ENCODE measurements at regions of chr10 and their contacts with region 1.

Region 1: GRCh38 chr10:92592761-92593618 is at the start of gene KIF11:
- DNase-seq: peak; percentile 89 to 95 (median 94)
- ATAC-seq: peak; percentile 89
- H3K4me3 ChIP-seq: peak within 1 kb of the TSS; percentile 83
- H3K4me3 Mint-ChIP-seq: peak within 1 kb of the TSS; percentile 95 to 100 (median 99)
- H3K27ac ChIP-seq: peak within 1 kb of the TSS; percentile 96
- H3K27ac Mint-ChIP-seq: peak within 1 kb of the TSS; percentile 96 to 100 (median 100)
- H3K4me1 ChIP-seq: peaks cover 12 to 28% of the 10 kb centered on the region in 2 donors
- H3K4me1 Mint-ChIP-seq: peaks cover 9 to 54% (median 28%) of the 10 kb centered on the region in 7 donors
- H3K27me3 ChIP-seq: no peaks in the 10 kb centered on the region
- H3K27me3 Mint-ChIP-seq: peaks cover 0 to 5% (median 0%) of the 10 kb centered on the region in 5 donors
- total RNA-seq, gene KIF11: 0.32 to 52.6 (median 0.75) TPM

Region 2: DNA sequence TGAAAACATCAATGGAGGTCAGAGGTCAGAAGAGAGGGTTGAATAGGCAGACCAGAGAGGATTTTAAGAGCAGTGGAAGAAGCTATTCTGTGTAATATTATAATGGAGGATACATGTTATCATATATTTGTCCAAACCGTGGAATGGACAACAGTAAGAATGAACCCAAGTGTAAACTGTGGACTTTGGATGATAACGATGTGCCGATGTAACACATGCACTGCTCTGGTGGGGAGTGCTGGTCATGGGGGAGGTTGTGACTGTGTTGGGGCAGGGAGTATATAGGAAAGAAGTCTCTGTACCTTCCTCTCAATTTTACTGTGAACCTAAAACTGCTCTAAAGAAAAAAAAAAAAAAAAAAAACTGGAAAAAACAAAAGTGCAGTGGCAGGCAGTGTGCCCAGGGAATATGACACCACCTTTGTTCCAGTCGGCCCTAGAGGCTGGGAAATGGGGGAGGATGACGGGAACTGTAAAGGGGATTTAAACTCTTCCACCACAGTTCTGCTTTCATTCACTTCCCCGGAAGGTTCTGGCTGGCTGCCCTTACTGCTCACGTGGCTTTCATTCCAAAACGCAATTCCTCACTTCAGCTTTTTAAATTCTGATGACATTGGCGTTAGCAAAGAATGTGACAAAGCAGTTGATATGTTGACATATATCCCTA is 1558.4 kb before region 1 on chr10:
- CTCF ChIA-PET with region 1: no interaction called
- POLR2A ChIA-PET with region 1: no interaction called
- intact Hi-C with region 1: loop called in 1 of 2 experiments (anchors 10 kb)
- DNase-seq: no peak
- ATAC-seq: no peak
- H3K4me3 ChIP-seq: no peak overlapping the region
- H3K4me3 Mint-ChIP-seq: peak overlapping the region in 9 of 10 donors; percentile 43 to 88 (median 64)
- H3K27ac ChIP-seq: peak overlapping the region; percentile 57
- H3K27ac Mint-ChIP-seq: peak overlapping the region; percentile 86 to 97 (median 89)
- H3K4me1 ChIP-seq: peaks cover 14 to 17% of the 10 kb centered on the region in 2 donors
- H3K4me1 Mint-ChIP-seq: peaks cover 14 to 33% (median 30%) of the 10 kb centered on the region in 7 donors
- H3K27me3 ChIP-seq: no peaks in the 10 kb centered on the region
- H3K27me3 Mint-ChIP-seq: peaks cover 0 to 19% (median 0%) of the 10 kb centered on the region in 5 donors

Region 3: DNA sequence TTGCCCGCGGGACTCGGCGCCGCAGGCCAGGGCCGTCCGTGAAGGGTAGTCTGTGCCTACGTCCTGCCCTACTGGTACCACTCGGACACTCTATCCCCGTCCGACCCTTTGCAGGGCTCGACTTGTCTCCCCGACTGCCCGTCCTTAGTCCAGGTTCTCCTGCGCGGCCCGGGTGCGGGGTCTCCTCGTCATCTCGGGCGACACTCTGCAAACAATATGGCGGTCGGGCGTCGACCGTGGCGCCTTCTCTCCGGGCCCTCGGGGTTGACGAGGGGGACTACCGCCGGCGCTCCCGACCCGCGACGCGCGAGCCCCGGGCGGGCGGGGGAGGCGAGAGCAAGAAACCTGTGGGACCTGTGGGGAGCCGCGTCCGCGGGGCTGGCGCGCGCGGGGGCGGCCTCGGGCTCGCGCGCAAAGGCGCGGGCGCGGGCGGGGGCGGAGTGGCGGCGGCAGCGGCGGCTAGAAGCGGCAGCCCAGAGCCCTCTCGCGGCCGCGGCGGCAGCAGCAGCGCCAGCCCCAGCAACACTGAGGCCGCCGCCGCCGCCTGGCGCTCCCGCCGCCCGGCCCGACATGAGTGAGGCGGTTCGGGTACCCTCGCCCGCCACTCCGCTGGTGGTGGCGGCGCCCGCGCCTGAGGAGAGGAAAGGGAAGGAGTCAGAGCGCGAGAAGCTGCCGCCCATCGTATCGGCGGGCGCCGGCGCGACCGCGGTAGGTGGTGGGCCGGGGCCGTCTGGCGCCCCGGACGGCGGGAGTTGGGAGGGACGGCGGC is 1182.9 kb before region 1 on chr10 and contains the start of gene HECTD2:
- CTCF ChIA-PET with region 1: no interaction called
- POLR2A ChIA-PET with region 1: no interaction called
- intact Hi-C with region 1: loop called in 1 of 2 experiments (anchors 2 kb)
- DNase-seq: peak; percentile 76 to 89 (median 86)
- ATAC-seq: peak; percentile 93
- H3K4me3 ChIP-seq: peak within 1 kb of the TSS; percentile 83
- H3K4me3 Mint-ChIP-seq: peak within 1 kb of the TSS; percentile 75 to 93 (median 90)
- H3K27ac ChIP-seq: peak within 1 kb of the TSS; percentile 88
- H3K27ac Mint-ChIP-seq: peak within 1 kb of the TSS; percentile 81 to 96 (median 91)
- H3K4me1 ChIP-seq: peaks cover 8 to 17% of the 10 kb centered on the region in 2 donors
- H3K4me1 Mint-ChIP-seq: peaks cover 8 to 18% (median 13%) of the 10 kb centered on the region in 7 donors
- H3K27me3 ChIP-seq: no peaks in the 10 kb centered on the region
- H3K27me3 Mint-ChIP-seq: peaks cover 0 to 27% (median 0%) of the 10 kb centered on the region in 5 donors
- total RNA-seq, gene HECTD2: 1.1 to 4.6 (median 2.0) TPM

Region 4: GRCh38 chr10:92290837-92291615 is 302.0 kb before region 1 on chr10 and contains the starts of genes CPEB3 and MARCHF5:
- CTCF ChIA-PET with region 1: no interaction called
- POLR2A ChIA-PET with region 1: interaction called, 6 read pairs
- intact Hi-C with region 1: loop called (anchors 1 kb)
- DNase-seq: peak; percentile 77 to 92 (median 85)
- ATAC-seq: peak; percentile 99
- H3K4me3 ChIP-seq: peak within 1 kb of the TSS; percentile 90
- H3K4me3 Mint-ChIP-seq: peak within 1 kb of the TSS; percentile 85 to 97 (median 95)
- H3K27ac ChIP-seq: peak within 1 kb of the TSS; percentile 90
- H3K27ac Mint-ChIP-seq: peak within 1 kb of the TSS; percentile 75 to 96 (median 88)
- H3K4me1 ChIP-seq: peaks cover 0 to 6% of the 10 kb centered on the region in 2 donors
- H3K4me1 Mint-ChIP-seq: peaks cover 21 to 41% (median 31%) of the 10 kb centered on the region in 7 donors
- H3K27me3 ChIP-seq: no peaks in the 10 kb centered on the region
- H3K27me3 Mint-ChIP-seq: no peaks in the 10 kb centered on the region
- total RNA-seq, gene CPEB3: 2.0 to 3.3 (median 2.2) TPM
- total RNA-seq, gene MARCHF5: 22.0 to 37.1 (median 33.8) TPM

Region 5: DNA sequence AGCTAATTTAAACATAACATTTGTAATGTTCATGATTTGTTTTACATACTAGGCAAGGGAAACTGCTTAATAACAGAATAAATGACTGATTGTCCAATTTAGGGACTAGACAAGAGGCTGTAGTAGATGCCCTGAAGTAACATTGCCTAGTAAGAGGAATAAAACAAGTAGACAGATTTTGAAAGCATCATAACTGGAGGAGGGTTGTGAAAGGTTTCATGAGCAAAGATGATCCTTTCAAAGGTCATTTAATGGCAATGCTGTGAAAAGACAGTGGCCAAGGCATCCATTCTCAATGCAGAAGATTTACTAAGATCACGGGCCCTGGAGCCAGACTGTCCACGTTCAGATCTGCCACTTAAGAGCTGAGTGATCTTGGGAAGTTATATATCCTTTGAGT is 51.9 kb after region 1 on chr10:
- CTCF ChIA-PET with region 1: no interaction called
- POLR2A ChIA-PET with region 1: no interaction called
- intact Hi-C with region 1: loop called in 1 of 2 experiments (anchors 1 kb)
- DNase-seq: no peak
- ATAC-seq: no peak
- H3K4me3 ChIP-seq: no peak overlapping the region
- H3K4me3 Mint-ChIP-seq: no peak overlapping the region
- H3K27ac ChIP-seq: no peak overlapping the region
- H3K27ac Mint-ChIP-seq: no peak overlapping the region
- H3K4me1 ChIP-seq: no peaks in the 10 kb centered on the region
- H3K4me1 Mint-ChIP-seq: peaks cover 0 to 13% (median 0%) of the 10 kb centered on the region in 7 donors
- H3K27me3 ChIP-seq: no peaks in the 10 kb centered on the region
- H3K27me3 Mint-ChIP-seq: no peaks in the 10 kb centered on the region

Region 6: DNA sequence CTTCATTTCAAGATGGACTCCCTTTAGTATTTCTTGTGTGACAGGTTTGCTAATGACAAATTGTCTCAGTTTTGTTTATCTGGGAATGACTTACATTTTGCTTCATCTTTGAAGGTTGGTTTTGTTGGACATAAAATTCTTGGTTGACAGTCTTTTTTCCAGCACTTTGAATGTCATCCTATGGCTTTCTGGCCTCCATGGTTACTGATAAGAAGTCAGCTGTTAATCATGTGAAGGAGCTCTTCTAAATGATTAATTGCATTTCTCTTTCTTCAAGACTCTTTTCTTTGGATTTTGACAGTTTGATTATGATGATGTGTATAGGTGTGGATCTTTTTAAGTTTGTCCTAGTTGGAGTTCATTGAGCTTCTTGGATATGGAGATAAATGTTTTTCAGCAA is 69.9 kb after region 1 on chr10:
- CTCF ChIA-PET with region 1: no interaction called
- POLR2A ChIA-PET with region 1: no interaction called
- intact Hi-C with region 1: no loop called
- DNase-seq: no peak
- ATAC-seq: no peak
- H3K4me3 ChIP-seq: no peak overlapping the region
- H3K4me3 Mint-ChIP-seq: no peak overlapping the region
- H3K27ac ChIP-seq: no peak overlapping the region
- H3K27ac Mint-ChIP-seq: no peak overlapping the region
- H3K4me1 ChIP-seq: no peaks in the 10 kb centered on the region
- H3K4me1 Mint-ChIP-seq: no peaks in the 10 kb centered on the region
- H3K27me3 ChIP-seq: no peaks in the 10 kb centered on the region
- H3K27me3 Mint-ChIP-seq: peaks cover 0 to 10% (median 4%) of the 10 kb centered on the region in 5 donors

Region 7: GRCh38 chr10:93496322-93497041 is 903.5 kb after region 1 on chr10 and contains the start of gene CEP55:
- CTCF ChIA-PET with region 1: no interaction called
- POLR2A ChIA-PET with region 1: no interaction called
- intact Hi-C with region 1: loop called (anchors 1 to 2 kb)
- DNase-seq: peak; percentile 90 to 97 (median 94)
- ATAC-seq: peak; percentile 100
- H3K4me3 ChIP-seq: peak within 1 kb of the TSS; percentile 100
- H3K4me3 Mint-ChIP-seq: peak within 1 kb of the TSS; percentile 84 to 95 (median 92)
- H3K27ac ChIP-seq: no peak within 1 kb of the TSS
- H3K27ac Mint-ChIP-seq: peak within 1 kb of the TSS in 8 of 9 donors; percentile 13 to 90 (median 72)
- H3K4me1 ChIP-seq: peaks cover 7 to 11% of the 10 kb centered on the region in 2 donors
- H3K4me1 Mint-ChIP-seq: peaks cover 0 to 48% (median 12%) of the 10 kb centered on the region in 7 donors
- H3K27me3 ChIP-seq: no peaks in the 10 kb centered on the region
- H3K27me3 Mint-ChIP-seq: peaks cover 0 to 9% (median 7%) of the 10 kb centered on the region in 5 donors
- total RNA-seq, gene CEP55: 0.54 to 48.6 TPM in 2 of 5 experiments, not detected in the others

Region 8: GRCh38 chr10:93762979-93763391 is 1170.0 kb after region 1 on chr10:
- CTCF ChIA-PET with region 1: no interaction called
- POLR2A ChIA-PET with region 1: no interaction called
- intact Hi-C with region 1: no loop called
- DNase-seq: no peak
- ATAC-seq: no peak
- H3K4me3 ChIP-seq: no peak overlapping the region
- H3K4me3 Mint-ChIP-seq: no peak overlapping the region
- H3K27ac ChIP-seq: no peak overlapping the region
- H3K27ac Mint-ChIP-seq: no peak overlapping the region
- H3K4me1 ChIP-seq: no peaks in the 10 kb centered on the region
- H3K4me1 Mint-ChIP-seq: peaks cover 0 to 8% (median 7%) of the 10 kb centered on the region in 7 donors
- H3K27me3 ChIP-seq: no peaks in the 10 kb centered on the region
- H3K27me3 Mint-ChIP-seq: peaks cover 34 to 46% (median 43%) of the 10 kb centered on the region in 5 donors